Left ventricle myocardium inferior (tissue), 1 donor: ENCODE measurements at regions of chr13 and their contacts with region 1.

Region 1: GRCh38 chr13:95834134-95834765 is 157.3 kb downstream of the DNAJC3 start:
- DNase-seq: peak; percentile 33
- H3K4me3 ChIP-seq: no peak overlapping the region
- H3K27ac ChIP-seq: no peak overlapping the region
- H3K4me1 ChIP-seq: peaks cover 7% of the 10 kb centered on the region
- H3K27me3 ChIP-seq: no peaks in the 10 kb centered on the region
- CTCF ChIP-seq: peak; percentile 93

Region 2: DNA sequence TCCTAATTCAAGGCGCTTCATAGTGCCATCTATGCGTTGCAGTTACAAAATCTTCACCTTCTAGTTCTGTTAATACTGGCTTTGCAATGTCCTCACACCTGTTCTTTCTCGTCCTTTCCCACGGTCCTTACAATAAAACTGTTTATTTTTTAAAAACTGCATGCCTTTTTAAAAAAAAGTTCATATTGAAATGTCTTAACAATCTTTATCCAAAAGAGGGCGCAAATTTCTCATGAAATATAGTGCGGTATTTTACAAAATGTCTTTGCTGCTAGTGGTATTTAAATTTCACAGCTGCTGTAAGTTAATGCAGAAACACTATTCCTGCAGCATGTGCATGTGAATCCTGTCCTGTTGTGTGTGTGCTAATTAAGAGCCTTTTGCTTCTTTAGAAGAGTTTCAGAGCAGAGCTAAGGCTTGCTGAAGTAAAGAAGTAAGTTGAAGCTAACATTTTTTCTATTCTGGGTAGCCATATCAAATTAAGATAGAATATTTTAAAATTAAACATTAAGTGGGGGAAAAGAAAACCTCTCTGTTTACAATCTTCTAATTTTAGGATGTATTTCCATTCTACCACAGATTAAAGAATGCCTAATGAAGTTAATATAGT is 297.5 kb before region 1 on chr13:
- intact Hi-C with region 1: loop called (anchors 10 kb)
- DNase-seq: no peak
- H3K4me3 ChIP-seq: no peak overlapping the region
- H3K27ac ChIP-seq: no peak overlapping the region
- H3K4me1 ChIP-seq: peaks cover 22% of the 10 kb centered on the region
- H3K27me3 ChIP-seq: peaks cover 3% of the 10 kb centered on the region
- CTCF ChIP-seq: peak; percentile 51

Region 3: DNA sequence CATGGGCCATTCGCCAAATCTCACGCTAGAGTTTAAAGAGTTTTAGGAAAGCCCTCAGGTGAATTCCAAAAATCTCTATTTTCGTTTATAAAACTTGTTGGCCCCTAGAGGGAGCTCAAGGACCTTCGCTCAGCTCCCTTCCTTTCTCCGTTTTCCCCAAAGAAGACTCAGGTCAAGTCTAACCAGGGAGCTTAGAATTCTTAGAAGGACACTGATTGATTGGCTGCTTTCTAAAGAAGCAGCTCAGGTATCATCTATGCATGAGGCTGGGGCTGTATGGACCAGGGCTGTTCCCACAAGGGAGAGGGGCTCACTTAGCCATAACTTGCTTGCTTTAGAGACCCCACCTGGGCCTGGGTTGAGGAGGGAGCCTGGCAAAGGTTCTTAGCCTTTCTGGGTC is 210.2 kb before region 1 on chr13:
- intact Hi-C with region 1: loop called (anchors 5 kb)
- DNase-seq: no peak
- H3K4me3 ChIP-seq: no peak overlapping the region
- H3K27ac ChIP-seq: no peak overlapping the region
- H3K4me1 ChIP-seq: peaks cover 9% of the 10 kb centered on the region
- H3K27me3 ChIP-seq: no peaks in the 10 kb centered on the region
- CTCF ChIP-seq: peak; percentile 74